Activated naive CD4-positive, alpha-beta T cell treated with anti-CD3 and anti-CD28 coated beads, Interleukin-2, amount 10 ng/mL, durations not matched to agents 7 days and 5 days (primary cell): ENCODE measurements at regions of chr11 and their contacts with region 1.

Region 1: DNA sequence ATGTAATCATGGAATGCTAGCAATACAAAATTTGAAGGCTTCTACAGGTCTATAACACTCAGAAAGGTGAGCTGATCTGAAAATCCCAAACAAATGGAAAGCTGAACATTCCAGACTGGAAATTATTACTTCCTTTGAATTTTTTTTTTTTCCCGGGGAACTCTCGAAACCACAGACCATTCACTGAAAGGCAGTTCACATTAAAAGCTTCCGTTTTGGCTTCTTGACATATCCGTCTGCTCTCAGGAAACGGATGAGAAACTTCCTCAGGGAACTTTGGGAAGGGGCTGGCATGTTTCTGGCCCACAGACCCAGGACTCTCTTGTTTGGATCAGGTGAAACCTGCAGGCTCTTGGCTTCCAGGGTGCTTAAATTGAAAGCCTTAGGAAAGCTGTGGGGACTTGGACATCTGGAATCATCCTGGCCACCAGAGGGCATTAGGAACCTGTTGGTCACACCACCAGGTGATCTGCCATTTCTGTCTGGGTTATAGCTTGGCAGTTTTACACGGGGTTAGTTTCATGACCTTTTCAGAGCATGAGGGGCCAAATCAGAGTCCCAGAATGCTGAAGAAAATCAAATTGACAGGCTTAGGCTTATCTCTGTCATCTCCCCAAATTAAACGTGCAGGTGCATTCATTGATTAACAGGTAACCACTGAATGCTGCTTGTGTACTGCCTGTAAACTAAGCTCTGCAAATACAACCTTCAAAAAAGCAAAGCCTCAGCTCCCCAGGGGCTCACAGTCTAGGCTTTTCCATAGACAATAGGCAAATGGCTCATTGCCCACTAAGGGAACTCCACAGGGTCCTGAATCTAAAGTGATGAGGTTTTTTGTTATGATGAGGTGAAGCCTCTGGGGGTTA is 22.7 kb upstream of the GRAMD1B start:
- DNase-seq: peak; percentile 76
- H3K4me3 Mint-ChIP-seq: peak overlapping the region; percentile 33
- H3K27ac Mint-ChIP-seq: no peak overlapping the region
- H3K4me1 Mint-ChIP-seq: peaks cover 35% of the 10 kb centered on the region
- H3K27me3 Mint-ChIP-seq: peaks cover 9% of the 10 kb centered on the region

Region 2: DNA sequence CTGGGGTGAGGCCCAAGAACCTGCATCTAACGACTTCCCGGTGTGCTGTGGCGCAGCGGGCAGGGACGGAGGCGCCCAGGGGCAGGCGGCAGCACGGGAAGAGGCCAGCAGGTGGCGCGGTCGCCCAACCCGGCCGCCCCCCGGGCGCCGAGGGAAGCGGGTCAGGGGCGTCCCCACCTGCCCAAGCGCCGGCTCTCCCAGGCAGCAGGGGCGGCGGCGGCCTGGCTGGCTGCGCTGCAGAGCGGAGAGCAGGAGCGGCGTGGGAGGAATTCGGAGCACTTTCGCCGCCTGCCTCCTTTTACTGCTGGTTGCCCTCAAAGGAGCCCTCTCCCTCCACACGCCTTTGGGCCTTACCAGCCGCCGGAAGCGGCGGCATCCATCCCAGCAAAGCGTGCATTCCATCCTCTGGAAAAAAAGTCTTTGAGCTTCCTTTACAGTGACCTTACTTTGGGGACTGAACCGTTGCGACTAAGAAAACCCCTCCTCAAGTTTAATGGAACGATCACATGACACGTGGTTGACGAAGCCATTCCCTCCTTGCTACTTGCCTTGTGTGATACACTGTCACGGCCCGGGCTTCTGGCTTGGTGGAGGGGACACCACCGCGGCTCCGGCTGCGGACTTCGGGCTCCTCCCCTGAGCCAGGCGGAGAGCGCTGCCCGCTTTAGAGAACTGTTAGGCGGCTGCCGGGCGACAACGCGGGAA is 105.5 kb before region 1 on chr11:
- CTCF ChIA-PET with region 1: interaction called, 31 read pairs
- DNase-seq: peak; percentile 78
- H3K4me3 Mint-ChIP-seq: peak overlapping the region; percentile 54
- H3K27ac Mint-ChIP-seq: no peak overlapping the region
- H3K4me1 Mint-ChIP-seq: peaks cover 46% of the 10 kb centered on the region
- H3K27me3 Mint-ChIP-seq: no peaks in the 10 kb centered on the region

Region 3: GRCh38 chr11:123321636-123322035 is 85.7 kb before region 1 on chr11:
- CTCF ChIA-PET with region 1: no interaction called
- DNase-seq: no peak
- H3K4me3 Mint-ChIP-seq: no peak overlapping the region
- H3K27ac Mint-ChIP-seq: no peak overlapping the region
- H3K4me1 Mint-ChIP-seq: no peaks in the 10 kb centered on the region
- H3K27me3 Mint-ChIP-seq: peaks cover 23% of the 10 kb centered on the region

Region 4: GRCh38 chr11:123429913-123430720 is 22.8 kb after region 1 on chr11 and contains the start of gene GRAMD1B:
- CTCF ChIA-PET with region 1: interaction called, 86 read pairs
- DNase-seq: peak; percentile 93
- H3K4me3 Mint-ChIP-seq: peak within 1 kb of the TSS; percentile 86
- H3K27ac Mint-ChIP-seq: peak within 1 kb of the TSS; percentile 93
- H3K4me1 Mint-ChIP-seq: peaks cover 50% of the 10 kb centered on the region
- H3K27me3 Mint-ChIP-seq: no peaks in the 10 kb centered on the region

Region 5: DNA sequence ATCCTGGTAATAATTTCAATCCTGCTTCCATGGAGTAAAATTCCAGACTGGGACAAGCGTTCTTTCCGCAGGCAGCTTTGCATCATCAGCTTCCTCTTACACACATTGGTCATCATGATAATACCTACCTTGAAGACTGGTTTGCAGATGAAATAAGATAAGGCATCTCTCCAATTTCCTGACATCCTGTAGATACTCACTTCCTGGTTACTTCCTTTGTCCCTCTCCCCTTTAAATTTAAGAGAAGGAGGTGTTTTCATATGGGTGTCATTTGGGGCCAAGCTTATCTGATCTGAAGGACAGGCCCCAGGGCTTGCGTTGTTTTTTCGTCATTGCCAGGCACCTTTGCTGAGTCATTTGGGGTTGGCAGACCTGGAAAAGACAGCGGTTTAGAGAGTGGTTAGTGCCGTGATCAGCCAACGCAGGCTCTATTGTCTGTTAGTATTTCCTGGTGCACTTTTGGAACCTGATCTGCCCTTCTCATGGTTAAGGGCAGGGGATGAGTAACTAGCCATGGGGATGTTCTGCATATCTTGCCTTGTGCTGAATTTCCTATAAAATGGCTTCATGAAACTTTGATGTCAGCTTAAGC is 46.8 kb after region 1 on chr11:
- CTCF ChIA-PET with region 1: interaction called, 20 read pairs
- DNase-seq: peak; percentile 71
- H3K4me3 Mint-ChIP-seq: peak overlapping the region; percentile 3
- H3K27ac Mint-ChIP-seq: peak overlapping the region; percentile 82
- H3K4me1 Mint-ChIP-seq: peaks cover 86% of the 10 kb centered on the region
- H3K27me3 Mint-ChIP-seq: no peaks in the 10 kb centered on the region

Region 6: DNA sequence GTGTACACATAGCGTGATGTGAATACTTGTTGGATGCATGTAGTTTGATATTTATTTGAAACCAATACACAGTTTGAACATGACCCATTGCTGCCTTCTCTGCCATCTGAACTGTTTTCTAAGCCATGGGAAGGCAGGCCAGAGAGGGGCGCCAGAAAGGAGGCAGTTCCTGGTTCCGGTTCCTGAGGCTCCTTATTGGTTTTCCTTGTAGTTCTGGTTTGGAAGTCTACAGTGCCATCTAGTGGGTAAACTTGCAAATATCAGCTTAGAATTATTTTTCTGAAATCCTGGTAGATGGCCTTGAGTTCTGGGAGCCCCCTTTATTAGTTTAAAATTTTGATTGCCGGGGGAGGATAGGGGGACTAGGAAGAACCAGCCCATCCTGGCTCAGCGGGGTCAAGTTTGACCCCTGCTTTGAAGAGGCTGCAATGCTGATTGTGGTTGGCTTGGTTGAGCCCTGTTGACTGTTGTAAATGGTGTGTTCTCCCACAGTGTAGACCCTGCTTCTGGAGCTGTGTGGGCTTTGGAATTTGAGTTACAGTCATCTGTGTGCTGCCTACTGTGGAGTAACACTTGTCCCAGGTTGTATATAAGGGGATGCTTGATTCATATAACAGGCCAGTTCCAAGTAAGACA is 71.1 kb after region 1 on chr11:
- CTCF ChIA-PET with region 1: interaction called, 232 read pairs
- DNase-seq: peak; percentile 53
- H3K4me3 Mint-ChIP-seq: no peak overlapping the region
- H3K27ac Mint-ChIP-seq: no peak overlapping the region
- H3K4me1 Mint-ChIP-seq: peaks cover 32% of the 10 kb centered on the region
- H3K27me3 Mint-ChIP-seq: no peaks in the 10 kb centered on the region

Region 7: GRCh38 chr11:124167826-124168231 is 760.5 kb after region 1 on chr11:
- CTCF ChIA-PET with region 1: no interaction called
- DNase-seq: no peak
- H3K4me3 Mint-ChIP-seq: no peak overlapping the region
- H3K27ac Mint-ChIP-seq: no peak overlapping the region
- H3K4me1 Mint-ChIP-seq: no peaks in the 10 kb centered on the region
- H3K27me3 Mint-ChIP-seq: no peaks in the 10 kb centered on the region